ENCODE measurements at regions of chr14 and their contacts with region 1.

Region 1: GRCh38 chr14:91418387-91419043 is 895 bp upstream of the CCDC88C start:
- DNase-seq: peak; percentile 42
- H3K4me3 ChIP-seq: peak overlapping the region in 2 of 3 experiments; percentile 25 to 54
- H3K27ac ChIP-seq: no peak overlapping the region
- H3K4me1 ChIP-seq: peaks cover 11% of the 10 kb centered on the region
- H3K27me3 ChIP-seq: no peaks in the 10 kb centered on the region
- CTCF ChIP-seq: peak; percentile 94 to 95

Region 2: GRCh38 chr14:91177073-91178034 is 241.2 kb before region 1 on chr14:
- CTCF ChIA-PET with region 1: no interaction called
- dilution Hi-C with region 1: no loop called
- in situ Hi-C with region 1: no loop called
- intact Hi-C with region 1: loop called (anchors 5 kb)
- DNase-seq: peak; percentile 55
- H3K4me3 ChIP-seq: no peak overlapping the region
- H3K27ac ChIP-seq: no peak overlapping the region
- H3K4me1 ChIP-seq: no peaks in the 10 kb centered on the region
- H3K27me3 ChIP-seq: no peaks in the 10 kb centered on the region
- CTCF ChIP-seq: peak; percentile 75 to 89

Region 3: GRCh38 chr14:91323671-91324605 is 94.6 kb before region 1 on chr14:
- CTCF ChIA-PET with region 1: no interaction called
- dilution Hi-C with region 1: no loop called
- in situ Hi-C with region 1: loop called in 1 of 2 experiments (anchors 5 kb)
- intact Hi-C with region 1: loop called (anchors 1 kb)
- DNase-seq: peak; percentile 43
- H3K4me3 ChIP-seq: no peak overlapping the region
- H3K27ac ChIP-seq: no peak overlapping the region
- H3K4me1 ChIP-seq: no peaks in the 10 kb centered on the region
- H3K27me3 ChIP-seq: no peaks in the 10 kb centered on the region
- CTCF ChIP-seq: peak; percentile 79 to 92

Region 4: DNA sequence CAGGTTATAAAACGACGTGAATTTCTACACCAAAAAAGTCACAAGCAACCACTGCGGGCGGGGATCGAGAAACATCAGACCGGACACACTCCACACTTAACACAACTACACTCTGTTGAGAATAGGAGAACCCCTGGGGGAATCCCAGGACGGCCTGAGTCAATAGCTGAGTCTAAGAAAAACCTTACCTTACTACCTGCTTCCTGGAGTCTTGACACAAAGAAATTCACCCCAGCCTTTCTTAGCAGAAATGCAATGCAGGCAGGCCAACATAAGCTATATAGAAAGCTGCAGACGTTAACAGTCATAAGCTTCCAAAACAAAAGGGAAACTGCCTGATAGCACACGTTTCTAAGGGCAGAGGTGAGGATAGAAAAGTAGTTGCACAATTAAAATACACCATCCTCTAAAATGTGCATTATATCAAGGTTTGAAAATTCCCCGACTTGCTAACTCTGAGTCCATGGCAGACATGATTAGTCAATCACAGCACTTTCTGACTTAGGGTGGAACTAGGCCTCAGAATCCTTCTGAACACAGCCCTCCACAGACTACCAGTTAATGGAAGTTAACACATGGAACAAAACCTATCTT is 68.9 kb before region 1 on chr14:
- CTCF ChIA-PET with region 1: no interaction called
- dilution Hi-C with region 1: loop called (anchors 5 kb)
- in situ Hi-C with region 1: no loop called
- intact Hi-C with region 1: no loop called
- DNase-seq: no peak
- H3K4me3 ChIP-seq: no peak overlapping the region
- H3K27ac ChIP-seq: no peak overlapping the region
- H3K4me1 ChIP-seq: no peaks in the 10 kb centered on the region
- H3K27me3 ChIP-seq: no peaks in the 10 kb centered on the region
- CTCF ChIP-seq: no peak

Region 5: GRCh38 chr14:91396959-91397815 is 21.3 kb before region 1 on chr14:
- CTCF ChIA-PET with region 1: no interaction called
- dilution Hi-C with region 1: no loop called
- in situ Hi-C with region 1: no loop called
- intact Hi-C with region 1: loop called (anchors 1 kb)
- DNase-seq: no peak
- H3K4me3 ChIP-seq: no peak overlapping the region
- H3K27ac ChIP-seq: no peak overlapping the region
- H3K4me1 ChIP-seq: peaks cover 16% of the 10 kb centered on the region
- H3K27me3 ChIP-seq: no peaks in the 10 kb centered on the region
- CTCF ChIP-seq: no peak

Region 6: GRCh38 chr14:91453744-91454143 is 35.2 kb after region 1 on chr14:
- CTCF ChIA-PET with region 1: no interaction called
- dilution Hi-C with region 1: no loop called
- in situ Hi-C with region 1: no loop called
- intact Hi-C with region 1: no loop called
- DNase-seq: no peak
- H3K4me3 ChIP-seq: no peak overlapping the region
- H3K27ac ChIP-seq: no peak overlapping the region
- H3K4me1 ChIP-seq: peaks cover 8% of the 10 kb centered on the region
- H3K27me3 ChIP-seq: no peaks in the 10 kb centered on the region
- CTCF ChIP-seq: no peak